Activated CD4-positive, alpha-beta T cell treated with anti-CD3 and anti-CD28 coated beads, Interleukin-2, amount 10 ng/mL, durations not matched to agents 24 days and 14 days (primary cell): ENCODE measurements at regions of chr2 and their contacts with region 1.

Region 1: GRCh38 chr2:27370026-27370815 is at the starts of genes EIF2B4 and SNX17:
- DNase-seq: peak; percentile 100
- H3K4me3 Mint-ChIP-seq: peak within 1 kb of the TSS; percentile 86
- H3K27ac Mint-ChIP-seq: peak within 1 kb of the TSS; percentile 98
- H3K4me1 Mint-ChIP-seq: peaks cover 34% of the 10 kb centered on the region
- H3K27me3 Mint-ChIP-seq: no peaks in the 10 kb centered on the region
- total RNA-seq, gene EIF2B4: 51.2 and 52.0 TPM in 2 replicates
- total RNA-seq, gene SNX17: 120 and 128 TPM in 2 replicates

Region 2: GRCh38 chr2:27322766-27323595 is 47.2 kb before region 1 on chr2 and contains the start of gene MPV17:
- intact Hi-C with region 1: loop called (anchors 1 kb)
- DNase-seq: peak; percentile 96
- H3K4me3 Mint-ChIP-seq: peak within 1 kb of the TSS; percentile 99
- H3K27ac Mint-ChIP-seq: peak within 1 kb of the TSS; percentile 98
- H3K4me1 Mint-ChIP-seq: peaks cover 15% of the 10 kb centered on the region
- H3K27me3 Mint-ChIP-seq: no peaks in the 10 kb centered on the region
- total RNA-seq, gene MPV17: 86.8 and 89.1 TPM in 2 replicates

Region 3: DNA sequence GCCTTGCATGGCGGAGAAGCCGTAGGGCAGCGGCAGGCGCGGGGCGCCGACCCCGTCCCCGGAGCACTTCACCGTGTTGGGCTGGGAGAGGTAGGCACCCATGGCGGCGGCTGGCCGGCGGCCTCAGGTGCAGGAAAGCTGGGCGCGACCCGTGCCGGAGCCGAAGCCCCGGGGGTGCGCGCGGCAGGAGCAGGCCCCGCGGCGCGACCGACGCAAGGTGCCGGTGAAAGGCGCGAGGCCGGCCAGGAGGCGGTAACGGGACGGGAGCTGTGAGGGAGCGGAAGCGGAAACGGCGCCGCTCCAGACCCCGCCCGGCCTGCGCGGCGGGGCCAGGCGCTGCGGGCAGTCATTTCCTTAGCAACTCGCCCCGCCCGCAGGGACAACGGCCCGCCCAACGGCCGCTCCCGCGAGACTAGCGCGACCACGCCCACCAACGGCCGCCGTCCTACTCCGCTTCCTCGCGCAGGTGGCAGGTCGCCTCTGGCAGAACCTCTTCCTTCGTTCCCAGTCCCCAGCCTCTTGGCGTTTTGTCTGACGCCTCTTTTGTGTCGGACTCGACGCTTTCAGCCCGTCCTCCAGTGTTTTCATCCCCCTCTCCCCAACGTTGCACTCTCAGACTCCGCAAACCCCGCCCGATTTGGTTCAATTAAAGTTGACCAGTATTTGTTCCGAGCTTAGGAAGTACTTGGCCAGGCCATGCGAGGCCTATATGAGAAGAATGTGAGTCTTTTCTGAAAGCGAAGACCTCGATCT is 39.3 kb after region 1 on chr2 and contains the start of gene PPM1G:
- intact Hi-C with region 1: loop called (anchors 1 kb)
- DNase-seq: peak; percentile 99
- H3K4me3 Mint-ChIP-seq: peak within 1 kb of the TSS; percentile 98
- H3K27ac Mint-ChIP-seq: peak within 1 kb of the TSS; percentile 89
- H3K4me1 Mint-ChIP-seq: peaks cover 30% of the 10 kb centered on the region
- H3K27me3 Mint-ChIP-seq: peaks cover 5% of the 10 kb centered on the region
- total RNA-seq, gene PPM1G: 165 and 167 TPM in 2 replicates

Region 4: DNA sequence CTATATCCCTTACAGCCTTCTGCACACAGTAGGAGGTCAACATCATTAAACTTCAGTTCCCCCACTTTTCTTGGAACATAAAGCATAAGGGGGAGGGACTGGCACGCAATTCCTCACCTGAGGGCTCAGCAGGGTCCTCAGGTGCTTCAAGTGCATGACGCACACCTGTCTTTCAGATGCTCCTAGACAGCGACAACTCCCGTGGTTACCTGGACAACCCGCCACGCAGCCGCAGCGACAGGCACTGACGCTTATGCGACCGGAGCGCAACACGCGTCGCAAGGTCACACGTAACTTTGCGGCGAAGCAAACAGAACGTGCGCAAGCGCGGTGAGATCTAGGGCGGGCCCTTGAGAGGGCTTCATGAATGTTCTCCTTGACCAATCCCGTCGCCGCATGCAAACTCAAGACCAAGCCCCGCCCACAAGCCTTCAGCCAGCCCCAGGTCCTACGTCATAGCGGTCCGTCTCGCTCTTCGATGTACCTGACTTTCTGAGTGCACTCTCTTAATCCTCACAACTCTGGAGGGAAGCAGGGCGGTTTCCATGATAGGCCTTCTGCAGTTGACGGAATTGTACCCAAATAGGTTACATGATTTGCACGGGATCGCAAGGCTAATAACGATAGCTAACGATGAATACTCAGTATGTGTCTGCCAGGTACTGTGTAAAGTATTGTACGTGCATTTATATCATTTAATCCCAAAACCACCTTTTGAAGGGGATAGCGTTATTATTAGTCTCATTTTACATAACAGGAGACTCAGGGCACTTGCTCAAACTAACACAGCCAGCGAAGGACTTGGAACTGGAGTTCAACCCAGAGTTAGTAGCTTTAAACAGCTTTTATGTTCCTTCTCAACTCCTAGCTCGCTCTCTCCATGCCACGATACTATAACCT is 119.5 kb after region 1 on chr2 and contains the start of gene IFT172:
- intact Hi-C with region 1: loop called (anchors 1 kb)
- DNase-seq: peak; percentile 100
- H3K4me3 Mint-ChIP-seq: peak within 1 kb of the TSS; percentile 84
- H3K27ac Mint-ChIP-seq: peak within 1 kb of the TSS; percentile 87
- H3K4me1 Mint-ChIP-seq: peaks cover 20% of the 10 kb centered on the region
- H3K27me3 Mint-ChIP-seq: peaks cover 18% of the 10 kb centered on the region
- total RNA-seq, gene IFT172: 12.4 and 12.9 TPM in 2 replicates

Region 5: GRCh38 chr2:27663463-27664249 is 293.4 kb after region 1 on chr2 and contains the starts of genes SLC4A1AP and SUPT7L:
- intact Hi-C with region 1: loop called (anchors 5 kb)
- DNase-seq: peak; percentile 93
- H3K4me3 Mint-ChIP-seq: peak within 1 kb of the TSS; percentile 98
- H3K27ac Mint-ChIP-seq: peak within 1 kb of the TSS; percentile 99
- H3K4me1 Mint-ChIP-seq: peaks cover 38% of the 10 kb centered on the region
- H3K27me3 Mint-ChIP-seq: no peaks in the 10 kb centered on the region
- total RNA-seq, gene SLC4A1AP: 27.1 and 28.7 TPM in 2 replicates
- total RNA-seq, gene SUPT7L: 33.3 and 34.5 TPM in 2 replicates